ENCODE measurements at regions of chr10 and their contacts with region 1.

Region 1: GRCh38 chr10:97888641-97889262 is 39.1 kb downstream of the GOLGA7B start:
- DNase-seq: peak; percentile 79
- H3K4me3 ChIP-seq: peak overlapping the region; percentile 42; the same call in 1 of the 2 replicates
- H3K27ac ChIP-seq: peak overlapping the region; percentile 98
- H3K4me1 ChIP-seq: peaks cover 40% of the 10 kb centered on the region
- H3K27me3 ChIP-seq: no peaks in the 10 kb centered on the region
- CTCF ChIP-seq: no peak; the same call in 1 of the 2 replicates

Region 2: GRCh38 chr10:97686962-97687784 is 201.6 kb before region 1 on chr10 and contains the start of gene AVPI1:
- CTCF ChIA-PET with region 1: interaction called, 6 read pairs
- POLR2A ChIA-PET with region 1: interaction called, 4 read pairs
- intact Hi-C with region 1: loop called (anchors 10 kb)
- DNase-seq: peak; percentile 91 to 97
- H3K4me3 ChIP-seq: peak within 1 kb of the TSS; percentile 81
- H3K27ac ChIP-seq: peak within 1 kb of the TSS; percentile 71
- H3K4me1 ChIP-seq: peaks cover 54% of the 10 kb centered on the region
- H3K27me3 ChIP-seq: no peaks in the 10 kb centered on the region
- CTCF ChIP-seq: no peak
- total RNA-seq, gene AVPI1: 20.5 and 22.4 TPM in 2 replicates

Region 3: GRCh38 chr10:97792141-97792721 is 96.5 kb before region 1 on chr10:
- CTCF ChIA-PET with region 1: interaction called, 12 read pairs
- POLR2A ChIA-PET with region 1: interaction called, 7 read pairs
- intact Hi-C with region 1: no loop called
- DNase-seq: peak in 1 of 2 experiments; percentile 53
- H3K4me3 ChIP-seq: no peak overlapping the region
- H3K27ac ChIP-seq: no peak overlapping the region
- H3K4me1 ChIP-seq: no peaks in the 10 kb centered on the region
- H3K27me3 ChIP-seq: no peaks in the 10 kb centered on the region
- CTCF ChIP-seq: peak; percentile 90

Region 4: GRCh38 chr10:97861929-97862328 is 26.8 kb before region 1 on chr10:
- CTCF ChIA-PET with region 1: no interaction called
- POLR2A ChIA-PET with region 1: interaction called, 15 read pairs
- intact Hi-C with region 1: no loop called
- DNase-seq: peak in 1 of 2 experiments; percentile 74
- H3K4me3 ChIP-seq: no peak overlapping the region
- H3K27ac ChIP-seq: peak overlapping the region; percentile 58
- H3K4me1 ChIP-seq: peaks cover 59% of the 10 kb centered on the region
- H3K27me3 ChIP-seq: no peaks in the 10 kb centered on the region
- CTCF ChIP-seq: no peak

Region 5: GRCh38 chr10:98262571-98262970 is 373.8 kb after region 1 on chr10:
- CTCF ChIA-PET with region 1: no interaction called
- POLR2A ChIA-PET with region 1: no interaction called
- intact Hi-C with region 1: loop called (anchors 10 kb)
- DNase-seq: peak in 1 of 2 experiments; percentile 47
- H3K4me3 ChIP-seq: no peak overlapping the region
- H3K27ac ChIP-seq: no peak overlapping the region
- H3K4me1 ChIP-seq: peaks cover 34% of the 10 kb centered on the region
- H3K27me3 ChIP-seq: no peaks in the 10 kb centered on the region
- CTCF ChIP-seq: peak; percentile 67

Measured in PC-9 (cell line).